ENCODE measurements at regions of chr7 and their contacts with region 1.

Region 1: DNA sequence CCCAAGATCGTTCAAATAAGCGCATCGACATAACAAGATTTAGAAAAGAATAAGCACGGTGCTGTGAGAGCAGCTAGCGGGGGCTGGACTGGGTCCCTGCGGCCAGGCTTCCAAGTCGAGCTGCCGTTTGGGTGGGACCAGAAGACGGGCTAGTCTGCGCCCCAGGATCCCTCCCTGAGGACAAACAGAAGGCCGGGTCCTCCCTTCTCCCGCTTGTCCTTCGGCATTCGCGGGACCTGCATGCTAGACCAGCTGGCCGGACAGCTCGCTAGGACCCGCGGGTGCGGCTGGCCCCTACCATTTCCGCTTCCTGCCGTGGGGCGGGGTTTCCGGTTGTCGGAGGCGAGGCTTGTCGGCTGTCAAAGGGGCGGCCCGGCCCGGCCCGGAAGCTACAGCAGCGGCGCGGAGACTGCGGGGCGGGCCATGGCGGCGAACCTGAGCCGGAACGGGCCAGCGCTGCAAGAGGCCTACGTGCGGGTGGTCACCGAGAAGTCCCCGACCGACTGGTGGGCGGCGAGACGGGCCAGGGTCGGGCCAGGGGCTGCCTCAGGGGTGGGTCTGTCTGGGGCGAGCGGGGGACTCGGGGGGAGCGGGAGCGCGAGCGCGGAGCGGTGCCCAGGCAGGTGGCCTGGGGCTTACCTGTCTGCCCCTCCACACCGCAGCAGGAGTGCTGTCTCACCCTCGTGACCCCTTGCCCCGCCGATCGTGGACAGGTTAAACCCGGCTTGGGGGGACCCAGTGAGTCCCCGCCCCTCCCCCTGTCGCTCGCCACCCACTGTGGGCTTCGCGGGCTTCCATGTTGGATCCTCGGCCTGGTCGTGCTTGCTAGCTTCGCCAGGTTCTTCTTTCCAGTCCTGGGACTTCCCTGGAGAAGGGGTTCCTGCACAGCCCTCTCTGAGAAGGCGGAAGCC is at the start of gene DBNL:
- DNase-seq: peak; percentile 86
- H3K4me3 Mint-ChIP-seq: peak within 1 kb of the TSS; percentile 78
- H3K27ac Mint-ChIP-seq: peak within 1 kb of the TSS; percentile 86
- H3K4me1 Mint-ChIP-seq: peaks cover 26% of the 10 kb centered on the region
- H3K27me3 Mint-ChIP-seq: no peaks in the 10 kb centered on the region
- CTCF ChIP-seq: no peak
- total RNA-seq, gene DBNL: 49.7 and 52.9 TPM in 2 replicates

Region 2: GRCh38 chr7:44059219-44060090 is 14.9 kb after region 1 on chr7:
- CTCF ChIA-PET with region 1: interaction called, 4 read pairs
- POLR2A ChIA-PET with region 1: interaction called, 24 read pairs
- intact Hi-C with region 1: no loop called
- DNase-seq: no peak
- H3K4me3 Mint-ChIP-seq: no peak overlapping the region
- H3K27ac Mint-ChIP-seq: no peak overlapping the region
- H3K4me1 Mint-ChIP-seq: peaks cover 11% of the 10 kb centered on the region
- H3K27me3 Mint-ChIP-seq: no peaks in the 10 kb centered on the region
- CTCF ChIP-seq: no peak

Region 3: GRCh38 chr7:44065436-44066118 is 21.0 kb after region 1 on chr7 and contains the start of gene PGAM2:
- CTCF ChIA-PET with region 1: interaction called, 4 read pairs
- POLR2A ChIA-PET with region 1: interaction called, 24 read pairs
- intact Hi-C with region 1: no loop called
- DNase-seq: no peak
- H3K4me3 Mint-ChIP-seq: no peak within 1 kb of the TSS
- H3K27ac Mint-ChIP-seq: no peak within 1 kb of the TSS
- H3K4me1 Mint-ChIP-seq: peaks cover 11% of the 10 kb centered on the region
- H3K27me3 Mint-ChIP-seq: no peaks in the 10 kb centered on the region
- CTCF ChIP-seq: no peak
- total RNA-seq, gene PGAM2: not detected in 2 replicates